HCT116 (cell line): ENCODE measurements at regions of chr6 and their contacts with region 1.

Region 1: GRCh38 chr6:73610444-73611275 is 43.1 kb downstream of the SLC17A5 start:
- DNase-seq: peak; percentile 18
- ATAC-seq: peak; percentile 73
- H3K4me3 ChIP-seq: no peak overlapping the region
- H3K27ac ChIP-seq: peak overlapping the region; percentile 11; the same call in 1 of the 2 replicates
- H3K4me1 ChIP-seq: peaks cover 0 to 9% of the 10 kb centered on the region in 2 experiments; a peak in 1 of 4 replicates
- H3K27me3 ChIP-seq: no peaks in the 10 kb centered on the region
- CTCF ChIP-seq: peak; percentile 40 to 69 (median 60)
- POLR2A ChIP-seq: no peak
- RAD21 ChIP-seq: peak; percentile 86

Region 2: DNA sequence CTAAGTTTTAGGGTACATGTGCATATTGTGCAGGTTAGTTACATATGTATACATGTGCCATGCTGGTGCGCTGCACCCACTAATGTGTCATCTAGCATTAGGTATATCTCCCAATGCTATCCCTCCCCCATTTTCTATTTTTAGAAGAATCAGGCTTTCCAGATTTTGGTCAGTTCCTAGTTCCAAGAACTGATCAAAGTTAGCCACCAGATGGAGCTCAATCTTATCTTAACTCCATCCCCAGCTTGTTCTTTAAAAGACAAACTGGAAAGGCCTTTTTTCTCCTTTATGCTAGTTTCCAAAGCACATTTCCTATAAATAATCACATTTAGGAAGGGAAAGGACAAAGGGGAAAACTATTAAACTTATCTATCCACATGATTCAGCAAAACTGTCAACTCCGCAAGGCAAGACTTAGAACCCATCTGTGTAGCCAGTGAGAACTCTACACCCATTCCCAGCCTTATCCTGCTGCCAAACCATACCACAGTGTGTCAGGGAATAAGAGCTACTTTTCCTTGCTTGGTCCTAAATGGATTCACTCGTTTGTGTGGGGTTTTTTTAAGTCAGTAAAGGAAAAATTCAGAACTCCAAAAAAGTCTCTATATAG is 324.9 kb before region 1 on chr6:
- CTCF ChIA-PET with region 1: interaction called, 3 read pairs
- POLR2A ChIA-PET with region 1: no interaction called
- RAD21 ChIA-PET with region 1: no interaction called
- intact Hi-C with region 1: loop called (anchors 10 kb)
- DNase-seq: peak; percentile 23
- ATAC-seq: peak; percentile 84
- H3K4me3 ChIP-seq: no peak overlapping the region
- H3K27ac ChIP-seq: no peak overlapping the region
- H3K4me1 ChIP-seq: peaks cover 0 to 6% of the 10 kb centered on the region in 2 experiments; a peak in 1 of 4 replicates
- H3K27me3 ChIP-seq: no peaks in the 10 kb centered on the region
- CTCF ChIP-seq: peak; percentile 41 to 56 (median 46); a peak in 5 of 6 replicates
- POLR2A ChIP-seq: no peak
- RAD21 ChIP-seq: peak; percentile 58

Region 3: GRCh38 chr6:73538116-73538779 is 72.4 kb before region 1 on chr6:
- CTCF ChIA-PET with region 1: no interaction called
- POLR2A ChIA-PET with region 1: no interaction called
- RAD21 ChIA-PET with region 1: no interaction called
- intact Hi-C with region 1: no loop called
- DNase-seq: no peak
- ATAC-seq: no peak
- H3K4me3 ChIP-seq: no peak overlapping the region
- H3K27ac ChIP-seq: no peak overlapping the region
- H3K4me1 ChIP-seq: no peaks in the 10 kb centered on the region
- H3K27me3 ChIP-seq: no peaks in the 10 kb centered on the region
- CTCF ChIP-seq: no peak
- POLR2A ChIP-seq: no peak
- RAD21 ChIP-seq: no peak

Region 4: GRCh38 chr6:74404366-74404765 is 793.7 kb after region 1 on chr6:
- CTCF ChIA-PET with region 1: no interaction called
- POLR2A ChIA-PET with region 1: no interaction called
- RAD21 ChIA-PET with region 1: no interaction called
- intact Hi-C with region 1: no loop called
- DNase-seq: no peak
- ATAC-seq: no peak
- H3K4me3 ChIP-seq: no peak overlapping the region
- H3K27ac ChIP-seq: no peak overlapping the region
- H3K4me1 ChIP-seq: no peaks in the 10 kb centered on the region
- H3K27me3 ChIP-seq: no peaks in the 10 kb centered on the region
- CTCF ChIP-seq: no peak
- POLR2A ChIP-seq: no peak
- RAD21 ChIP-seq: no peak